B cell (primary cell): ENCODE measurements at regions of chr19 and their contacts with region 1.

Region 1: GRCh38 chr19:56105090-56105701 is 15.9 kb downstream of the ZNF787 start:
- DNase-seq: peak; percentile 83
- ATAC-seq: peak; percentile 75
- H3K4me3 ChIP-seq: peak overlapping the region in 3 of 5 experiments; percentile 5 to 25 (median 21)
- H3K4me3 Mint-ChIP-seq: peak overlapping the region; percentile 64
- H3K27ac ChIP-seq: peak overlapping the region; percentile 54 to 72
- H3K27ac Mint-ChIP-seq: peak overlapping the region; percentile 80
- H3K4me1 ChIP-seq: peaks cover 39 to 41% of the 10 kb centered on the region in 2 donors
- H3K4me1 Mint-ChIP-seq: peaks cover 53% of the 10 kb centered on the region
- H3K27me3 ChIP-seq: no peaks in the 10 kb centered on the region
- H3K27me3 Mint-ChIP-seq: no peaks in the 10 kb centered on the region
- CTCF ChIP-seq: peak; percentile 74

Region 2: DNA sequence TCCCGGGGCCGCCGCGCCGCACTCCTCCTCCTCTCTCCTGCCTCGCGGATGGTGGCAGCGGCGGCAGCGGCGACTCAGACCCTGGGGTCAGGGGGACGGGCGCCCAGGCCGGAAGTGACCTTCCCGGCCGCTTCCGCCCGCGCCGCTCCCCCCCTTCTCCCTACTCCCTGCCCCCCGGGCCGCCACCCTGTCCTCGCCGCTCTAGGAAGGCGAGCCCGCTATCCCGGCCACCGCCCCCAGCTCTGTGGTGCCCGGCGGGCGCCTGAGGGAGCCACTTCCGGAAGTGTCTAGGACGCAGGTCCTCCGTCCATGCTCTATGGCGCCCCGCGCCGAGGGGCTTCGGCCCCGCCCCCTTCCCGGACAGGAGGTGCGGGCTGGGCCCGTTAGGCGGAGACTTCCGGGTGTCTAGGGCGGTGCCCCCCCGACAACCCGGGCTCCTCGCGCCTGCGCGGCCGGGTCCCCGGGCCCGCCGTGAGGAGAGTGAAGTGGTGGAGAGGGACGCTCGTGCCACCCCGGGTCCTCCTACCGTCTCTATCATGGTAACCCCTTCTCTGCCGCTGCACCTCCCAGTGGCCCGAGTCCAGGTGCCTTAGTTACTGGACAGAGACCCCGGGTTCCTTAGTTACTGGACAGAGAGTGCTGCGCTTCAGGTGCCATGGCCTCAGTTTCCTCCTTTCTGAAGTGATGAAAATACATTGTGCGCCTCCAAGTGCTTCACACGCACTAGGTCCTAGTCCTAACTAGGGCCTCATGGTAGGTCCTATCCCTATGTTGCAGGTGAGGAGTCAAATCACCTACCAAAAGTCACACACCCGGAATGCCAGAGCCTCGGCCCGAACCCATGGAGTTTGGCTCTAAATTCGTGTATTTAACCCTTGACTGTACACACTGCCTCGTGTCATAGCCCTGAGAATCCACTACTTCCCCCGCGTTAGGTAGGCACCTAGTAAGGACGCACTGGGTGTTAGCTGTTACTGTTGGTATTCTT is 16.3 kb after region 1 on chr19 and contains the start of gene ZNF787:
- CTCF ChIA-PET with region 1: interaction called, 3 read pairs
- POLR2A ChIA-PET with region 1: interaction called, 6 read pairs
- intact Hi-C with region 1: loop called (anchors 2 kb)
- DNase-seq: peak; percentile 98
- ATAC-seq: peak; percentile 83
- H3K4me3 ChIP-seq: peak within 1 kb of the TSS; percentile 37 to 95 (median 76)
- H3K4me3 Mint-ChIP-seq: peak within 1 kb of the TSS; percentile 94
- H3K27ac ChIP-seq: peak within 1 kb of the TSS; percentile 91 to 99
- H3K27ac Mint-ChIP-seq: peak within 1 kb of the TSS; percentile 99
- H3K4me1 ChIP-seq: peaks cover 18 to 29% of the 10 kb centered on the region in 2 donors
- H3K4me1 Mint-ChIP-seq: peaks cover 40% of the 10 kb centered on the region
- H3K27me3 ChIP-seq: no peaks in the 10 kb centered on the region
- H3K27me3 Mint-ChIP-seq: no peaks in the 10 kb centered on the region
- CTCF ChIP-seq: no peak
- total RNA-seq, gene ZNF787: 47.7 and 47.9 TPM in 2 replicates

Region 3: GRCh38 chr19:56170261-56170660 is 65.1 kb after region 1 on chr19:
- CTCF ChIA-PET with region 1: interaction called, 19 read pairs
- POLR2A ChIA-PET with region 1: no interaction called
- intact Hi-C with region 1: no loop called
- DNase-seq: no peak
- ATAC-seq: no peak
- H3K4me3 ChIP-seq: no peak overlapping the region
- H3K4me3 Mint-ChIP-seq: no peak overlapping the region
- H3K27ac ChIP-seq: no peak overlapping the region
- H3K27ac Mint-ChIP-seq: no peak overlapping the region
- H3K4me1 ChIP-seq: peaks cover 2 to 3% of the 10 kb centered on the region in 2 donors
- H3K4me1 Mint-ChIP-seq: peaks cover 2% of the 10 kb centered on the region
- H3K27me3 ChIP-seq: no peaks in the 10 kb centered on the region
- H3K27me3 Mint-ChIP-seq: peaks cover 18% of the 10 kb centered on the region
- CTCF ChIP-seq: no peak